Naive thymus-derived CD4-positive, alpha-beta T cell (primary cell): ENCODE measurements at regions of chr6 and their contacts with region 1.

Region 1: DNA sequence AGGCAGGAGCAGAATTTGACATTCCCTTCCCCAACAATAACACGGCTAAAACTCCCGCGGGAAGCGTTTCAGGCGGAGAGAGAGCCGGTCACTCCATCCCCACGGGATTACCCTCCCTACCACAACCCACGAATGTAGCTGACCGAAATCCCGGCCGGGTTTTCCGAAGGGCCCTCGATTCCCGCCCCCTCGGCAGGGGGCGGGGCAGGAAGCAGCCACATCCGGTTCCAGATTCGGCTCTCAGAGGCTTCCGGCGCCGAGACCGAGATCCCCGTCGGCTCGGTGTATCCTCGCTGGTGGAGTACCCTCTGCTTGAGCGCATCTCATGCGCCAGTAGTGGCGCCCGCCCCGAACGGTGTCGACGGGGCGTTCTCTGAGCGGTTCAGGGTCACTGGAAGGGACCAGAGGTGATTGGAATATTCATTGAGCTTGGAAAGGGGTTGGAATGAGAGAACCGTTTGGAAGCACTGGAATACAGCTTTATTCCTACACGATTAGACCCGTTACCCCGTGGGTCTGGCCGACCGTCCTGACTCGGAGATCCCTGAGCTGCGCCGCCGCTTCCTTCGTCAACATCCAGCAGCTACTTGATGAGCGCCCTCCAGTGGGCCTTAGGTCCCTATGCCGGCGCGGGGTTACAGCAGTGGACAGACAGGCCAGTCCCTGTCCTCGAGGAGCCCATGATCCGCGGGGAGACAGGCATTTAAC is 649 bp upstream of the RGL2 start:
- DNase-seq: peak; percentile 89 to 96 (median 93)
- ATAC-seq: peak; percentile 88
- H3K4me3 ChIP-seq: peak overlapping the region; percentile 78
- H3K4me3 Mint-ChIP-seq: peak overlapping the region; percentile 95 to 100 (median 99)
- H3K27ac ChIP-seq: peak overlapping the region; percentile 92
- H3K27ac Mint-ChIP-seq: peak overlapping the region; percentile 95 to 100 (median 99)
- H3K4me1 ChIP-seq: peaks cover 5 to 10% of the 10 kb centered on the region in 2 donors
- H3K4me1 Mint-ChIP-seq: peaks cover 25 to 48% (median 38%) of the 10 kb centered on the region in 7 donors
- H3K27me3 ChIP-seq: no peaks in the 10 kb centered on the region
- H3K27me3 Mint-ChIP-seq: peaks cover 0 to 3% (median 0%) of the 10 kb centered on the region in 5 donors

Region 2: GRCh38 chr6:32883789-32884188 is 415.6 kb before region 1 on chr6:
- CTCF ChIA-PET with region 1: no interaction called
- POLR2A ChIA-PET with region 1: no interaction called
- intact Hi-C with region 1: no loop called
- DNase-seq: no peak
- ATAC-seq: no peak
- H3K4me3 ChIP-seq: no peak overlapping the region
- H3K4me3 Mint-ChIP-seq: no peak overlapping the region
- H3K27ac ChIP-seq: no peak overlapping the region
- H3K27ac Mint-ChIP-seq: no peak overlapping the region
- H3K4me1 ChIP-seq: no peaks in the 10 kb centered on the region
- H3K4me1 Mint-ChIP-seq: peaks cover 0 to 4% (median 0%) of the 10 kb centered on the region in 7 donors
- H3K27me3 ChIP-seq: no peaks in the 10 kb centered on the region
- H3K27me3 Mint-ChIP-seq: peaks cover 0 to 6% (median 0%) of the 10 kb centered on the region in 5 donors

Region 3: GRCh38 chr6:33118525-33119123 is 180.8 kb before region 1 on chr6:
- CTCF ChIA-PET with region 1: no interaction called
- POLR2A ChIA-PET with region 1: no interaction called
- intact Hi-C with region 1: loop called in 1 of 2 experiments (anchors 1 kb)
- DNase-seq: peak in 7 of 9 donors; percentile 44 to 75 (median 65)
- ATAC-seq: peak; percentile 85
- H3K4me3 ChIP-seq: no peak overlapping the region
- H3K4me3 Mint-ChIP-seq: peak overlapping the region in 1 of 10 donors; percentile 12
- H3K27ac ChIP-seq: no peak overlapping the region
- H3K27ac Mint-ChIP-seq: no peak overlapping the region
- H3K4me1 ChIP-seq: peaks cover 0 to 4% of the 10 kb centered on the region in 2 donors
- H3K4me1 Mint-ChIP-seq: peaks cover 4 to 21% (median 13%) of the 10 kb centered on the region in 7 donors
- H3K27me3 ChIP-seq: peaks cover 0 to 12% of the 10 kb centered on the region in 2 donors
- H3K27me3 Mint-ChIP-seq: peaks cover 40 to 79% (median 45%) of the 10 kb centered on the region in 5 donors

Region 4: DNA sequence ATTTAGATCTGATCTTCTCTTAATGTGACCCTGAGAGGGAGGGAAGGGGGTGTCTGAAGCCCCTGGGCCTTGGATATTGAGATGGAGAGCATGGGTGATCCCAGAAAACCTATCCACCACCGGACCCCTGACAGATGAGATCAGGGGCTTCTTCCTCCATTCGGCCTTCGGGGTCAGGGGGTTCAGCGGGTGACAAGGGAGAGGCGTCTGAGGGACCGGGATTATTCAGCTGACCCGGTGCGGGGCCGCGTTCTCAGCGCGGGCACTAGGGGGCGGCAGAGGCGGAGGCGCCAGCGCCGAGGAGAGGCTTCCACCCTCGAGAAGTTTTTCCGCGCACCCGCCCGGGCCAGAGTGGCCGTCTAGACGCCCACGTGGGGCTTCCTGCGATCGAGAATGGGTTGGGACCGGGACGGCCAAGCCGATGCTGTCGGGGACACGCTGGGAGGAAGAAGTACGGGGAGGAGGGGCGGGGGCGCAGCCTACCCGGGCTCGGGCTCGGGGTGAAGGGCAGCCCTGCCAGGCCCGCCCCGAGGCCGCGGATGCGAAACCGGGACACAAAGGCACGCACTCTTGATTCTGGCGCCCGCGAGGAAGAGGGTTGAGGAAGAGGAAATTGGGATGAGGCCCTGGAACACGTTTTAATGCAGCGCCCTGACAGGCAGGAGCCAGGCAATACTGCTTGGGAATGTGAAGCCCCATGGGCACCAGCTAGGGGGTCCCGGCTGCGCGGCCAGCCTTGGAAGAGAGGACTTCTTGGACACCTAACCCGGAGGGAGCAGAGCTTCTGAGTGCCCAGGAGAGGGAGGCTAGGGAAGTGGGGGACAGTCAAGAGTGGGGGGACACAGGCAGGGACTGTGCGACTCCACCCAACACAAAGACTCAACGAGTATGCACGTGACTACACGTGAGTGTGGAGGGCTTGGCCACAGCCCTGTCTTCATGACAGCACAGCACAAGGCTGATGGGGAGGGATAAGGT is 137.7 kb before region 1 on chr6:
- CTCF ChIA-PET with region 1: no interaction called
- POLR2A ChIA-PET with region 1: no interaction called
- intact Hi-C with region 1: loop called in 1 of 2 experiments (anchors 1 kb)
- DNase-seq: peak; percentile 64 to 89 (median 79)
- ATAC-seq: peak; percentile 97
- H3K4me3 ChIP-seq: peak overlapping the region; percentile 51
- H3K4me3 Mint-ChIP-seq: peak overlapping the region; percentile 76 to 90 (median 85)
- H3K27ac ChIP-seq: no peak overlapping the region
- H3K27ac Mint-ChIP-seq: peak overlapping the region in 6 of 9 donors; percentile 26 to 82 (median 58)
- H3K4me1 ChIP-seq: no peaks in the 10 kb centered on the region
- H3K4me1 Mint-ChIP-seq: peaks cover 8 to 16% (median 10%) of the 10 kb centered on the region in 7 donors
- H3K27me3 ChIP-seq: no peaks in the 10 kb centered on the region
- H3K27me3 Mint-ChIP-seq: peaks cover 0 to 5% (median 0%) of the 10 kb centered on the region in 5 donors

Region 5: GRCh38 chr6:33276864-33277662 is 22.3 kb before region 1 on chr6 and contains the start of gene B3GALT4:
- CTCF ChIA-PET with region 1: interaction called, 10 read pairs
- POLR2A ChIA-PET with region 1: interaction called, 63 read pairs
- intact Hi-C with region 1: loop called (anchors 1 kb)
- DNase-seq: peak; percentile 55 to 88 (median 63)
- ATAC-seq: peak; percentile 81
- H3K4me3 ChIP-seq: peak within 1 kb of the TSS; percentile 67
- H3K4me3 Mint-ChIP-seq: peak within 1 kb of the TSS; percentile 84 to 99 (median 92)
- H3K27ac ChIP-seq: peak within 1 kb of the TSS; percentile 87
- H3K27ac Mint-ChIP-seq: peak within 1 kb of the TSS; percentile 88 to 98 (median 93)
- H3K4me1 ChIP-seq: peaks cover 47 to 50% of the 10 kb centered on the region in 2 donors
- H3K4me1 Mint-ChIP-seq: peaks cover 38 to 83% (median 65%) of the 10 kb centered on the region in 7 donors
- H3K27me3 ChIP-seq: no peaks in the 10 kb centered on the region
- H3K27me3 Mint-ChIP-seq: no peaks in the 10 kb centered on the region
- total RNA-seq, gene B3GALT4: 12.9 to 48.0 (median 18.2) TPM

Region 6: DNA sequence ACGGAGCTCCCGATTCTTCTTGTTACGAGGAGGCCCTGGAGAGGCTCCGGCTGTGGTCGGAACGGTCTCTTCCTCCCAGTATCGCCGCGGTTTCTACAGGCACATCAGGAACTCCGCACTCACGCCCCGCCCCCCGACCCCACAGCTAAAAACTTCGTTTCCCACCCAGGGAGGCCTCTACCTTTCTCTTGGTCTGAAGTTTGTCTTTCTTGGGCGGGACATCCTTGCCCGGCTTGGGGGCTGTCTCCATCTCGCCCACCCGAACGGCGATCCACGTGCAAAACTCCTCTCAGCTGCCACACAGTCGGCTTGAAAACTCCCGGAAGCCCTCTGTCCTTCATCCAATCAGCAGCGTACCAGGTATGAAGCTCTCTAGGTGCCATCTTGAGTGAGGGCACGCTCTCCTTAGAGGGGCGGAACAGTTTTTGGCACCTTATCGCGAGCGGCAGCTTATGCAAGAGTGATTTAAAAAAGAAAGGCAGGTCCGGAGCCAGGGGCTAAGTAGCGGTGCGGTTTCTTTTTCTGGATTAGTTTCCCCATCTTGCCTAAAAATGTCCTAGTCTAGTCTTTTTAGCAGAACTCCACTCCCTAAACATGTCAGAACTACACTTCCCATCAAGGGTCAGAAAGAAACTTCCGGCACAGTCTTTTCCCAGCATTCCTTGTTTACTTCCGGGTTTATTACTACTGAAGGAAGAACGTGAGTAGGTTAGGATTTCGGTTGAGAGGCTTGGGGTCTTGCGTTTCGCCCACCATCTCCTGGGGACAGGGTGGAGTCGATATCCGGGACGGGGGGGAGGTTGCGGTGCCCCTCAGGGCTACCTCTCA is 10.3 kb before region 1 on chr6 and contains the starts of genes PFDN6 and WDR46:
- CTCF ChIA-PET with region 1: interaction called, 13 read pairs
- POLR2A ChIA-PET with region 1: interaction called, 51 read pairs
- intact Hi-C with region 1: loop called (anchors 1 kb)
- DNase-seq: peak; percentile 55 to 90 (median 87)
- ATAC-seq: peak; percentile 96
- H3K4me3 ChIP-seq: peak within 1 kb of the TSS; percentile 97
- H3K4me3 Mint-ChIP-seq: peak within 1 kb of the TSS; percentile 89 to 99 (median 98)
- H3K27ac ChIP-seq: peak within 1 kb of the TSS; percentile 80
- H3K27ac Mint-ChIP-seq: peak within 1 kb of the TSS; percentile 89 to 98 (median 92)
- H3K4me1 ChIP-seq: peaks cover 19 to 20% of the 10 kb centered on the region in 2 donors
- H3K4me1 Mint-ChIP-seq: peaks cover 32 to 51% (median 45%) of the 10 kb centered on the region in 7 donors
- H3K27me3 ChIP-seq: no peaks in the 10 kb centered on the region
- H3K27me3 Mint-ChIP-seq: no peaks in the 10 kb centered on the region
- total RNA-seq, gene PFDN6: 14.6 to 73.2 (median 35.5) TPM
- total RNA-seq, gene WDR46: 25.3 to 62.7 (median 52.7) TPM

Region 7: DNA sequence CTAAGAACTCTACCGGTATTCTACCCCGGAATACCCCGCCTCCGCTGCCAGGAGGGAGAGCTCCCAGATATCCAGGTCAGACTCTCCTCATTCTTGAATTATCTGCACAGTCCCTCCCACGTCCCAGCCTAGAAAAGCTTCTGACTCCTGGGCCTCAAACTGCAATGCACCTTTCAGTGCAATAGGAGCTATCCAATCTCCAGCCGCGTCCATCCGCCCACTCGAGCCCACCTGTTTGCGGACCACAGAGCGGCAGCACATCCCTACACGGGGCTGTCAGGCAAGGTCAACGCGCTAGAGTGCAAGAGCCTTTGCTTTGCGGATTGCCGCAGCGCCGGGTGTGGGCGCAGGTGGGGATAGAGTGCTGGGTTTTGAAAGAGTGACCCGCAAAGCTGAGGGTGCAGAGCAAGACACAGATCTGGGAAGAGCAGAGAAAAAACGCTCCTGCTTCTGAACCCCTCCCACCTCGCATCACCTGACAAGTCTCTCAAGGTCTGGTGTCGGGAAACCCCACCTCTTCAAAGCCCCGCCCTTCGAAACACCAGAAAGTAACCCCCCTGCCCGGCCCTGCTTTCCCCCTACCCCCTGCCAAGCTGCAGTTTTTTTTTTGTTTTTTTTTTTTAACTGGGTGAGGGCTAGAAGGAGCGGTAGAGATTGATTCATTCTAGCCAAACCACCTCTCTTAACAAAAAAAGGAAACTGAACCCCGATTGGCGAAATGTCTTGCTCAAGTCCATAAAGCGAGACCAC is 13.2 kb after region 1 on chr6:
- CTCF ChIA-PET with region 1: interaction called, 6 read pairs
- POLR2A ChIA-PET with region 1: interaction called, 65 read pairs
- intact Hi-C with region 1: loop called (anchors 1 kb)
- DNase-seq: peak; percentile 51 to 94 (median 79)
- ATAC-seq: peak; percentile 65
- H3K4me3 ChIP-seq: peak overlapping the region; percentile 97
- H3K4me3 Mint-ChIP-seq: peak overlapping the region; percentile 81 to 100 (median 99)
- H3K27ac ChIP-seq: peak overlapping the region; percentile 99
- H3K27ac Mint-ChIP-seq: peak overlapping the region; percentile 97 to 99 (median 98)
- H3K4me1 ChIP-seq: peaks cover 33 to 38% of the 10 kb centered on the region in 2 donors
- H3K4me1 Mint-ChIP-seq: peaks cover 30 to 67% (median 54%) of the 10 kb centered on the region in 7 donors
- H3K27me3 ChIP-seq: no peaks in the 10 kb centered on the region
- H3K27me3 Mint-ChIP-seq: no peaks in the 10 kb centered on the region

Region 8: DNA sequence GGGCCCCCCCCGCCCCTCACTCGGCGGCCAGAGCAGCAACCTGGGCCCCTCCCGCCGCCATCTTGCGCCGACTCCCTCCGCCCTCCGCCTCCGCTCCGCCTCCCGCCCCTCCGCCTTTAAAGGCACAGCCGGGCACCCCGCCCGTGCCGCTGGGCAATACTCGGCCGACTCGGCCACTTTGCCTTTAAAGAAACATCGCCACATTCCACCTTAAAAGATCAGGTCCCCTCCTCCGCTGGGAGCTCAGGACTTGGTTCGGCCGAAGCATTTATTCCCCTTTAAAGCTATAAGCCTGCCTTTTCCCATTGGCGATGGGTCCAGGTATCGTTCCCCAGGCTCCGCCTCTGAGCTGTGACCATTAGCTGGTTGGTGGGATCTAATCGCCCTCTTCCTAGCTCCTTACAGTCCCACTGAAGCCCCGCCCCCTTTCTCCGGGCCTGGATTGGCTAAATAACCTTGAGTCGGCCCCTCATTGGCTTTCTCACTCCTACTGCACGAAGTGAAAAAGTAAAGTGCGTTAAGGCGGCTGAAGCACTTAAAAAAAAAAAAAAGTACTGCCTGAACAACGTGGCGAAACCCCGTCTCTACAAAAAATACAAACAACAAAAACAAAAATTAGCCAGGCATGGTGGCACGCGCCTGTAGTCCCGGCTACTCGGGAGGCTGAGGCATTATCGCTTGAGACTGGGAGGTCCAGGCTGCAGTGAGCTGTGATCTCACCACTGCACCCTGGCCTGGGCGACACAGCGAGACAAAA is 18.5 kb after region 1 on chr6 and contains the start of gene ZBTB22:
- CTCF ChIA-PET with region 1: interaction called, 6 read pairs
- POLR2A ChIA-PET with region 1: interaction called, 65 read pairs
- intact Hi-C with region 1: no loop called
- DNase-seq: peak; percentile 87 to 97 (median 96)
- ATAC-seq: peak; percentile 73
- H3K4me3 ChIP-seq: peak within 1 kb of the TSS; percentile 97
- H3K4me3 Mint-ChIP-seq: peak within 1 kb of the TSS; percentile 81 to 100 (median 100)
- H3K27ac ChIP-seq: peak within 1 kb of the TSS; percentile 99
- H3K27ac Mint-ChIP-seq: peak within 1 kb of the TSS; percentile 97 to 99 (median 98)
- H3K4me1 ChIP-seq: peaks cover 59 to 62% of the 10 kb centered on the region in 2 donors
- H3K4me1 Mint-ChIP-seq: peaks cover 53 to 85% (median 75%) of the 10 kb centered on the region in 7 donors
- H3K27me3 ChIP-seq: no peaks in the 10 kb centered on the region
- H3K27me3 Mint-ChIP-seq: peaks cover 0 to 2% (median 0%) of the 10 kb centered on the region in 5 donors
- total RNA-seq, gene ZBTB22: 15.5 to 30.1 (median 20.5) TPM